Activated CD8-positive, alpha-beta T cell treated with anti-CD3 and anti-CD28 coated beads, Interleukin-2, amount 10 ng/mL, durations not matched to agents 7 days and 5 days (primary cell): ENCODE measurements at regions of chr1 and their contacts with region 1.

Region 1: DNA sequence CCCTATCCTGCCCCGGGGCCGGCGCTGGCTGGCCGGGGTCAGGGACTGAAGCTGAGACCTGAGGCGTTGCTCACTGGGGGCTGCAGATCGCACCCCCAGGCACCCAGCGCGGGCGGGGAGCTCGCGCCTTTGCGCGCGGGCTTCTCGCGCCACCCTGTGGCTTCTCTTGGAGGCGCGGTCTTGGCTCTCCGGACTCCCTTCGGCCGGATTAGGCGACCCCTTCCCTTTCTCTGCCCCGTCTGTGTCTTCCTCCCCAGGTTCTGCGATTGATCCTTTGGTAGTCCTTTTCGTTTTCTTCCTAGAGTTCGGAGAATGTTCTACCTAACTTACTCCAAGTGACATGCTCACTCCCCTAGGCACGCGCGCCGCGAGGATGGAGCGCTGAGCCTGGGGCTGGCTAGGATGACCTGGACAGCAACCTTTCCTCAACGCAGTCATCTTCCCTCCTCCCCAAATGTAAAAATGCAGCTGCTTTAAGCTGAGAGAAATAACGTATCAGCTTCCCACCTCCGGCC is 495 bp upstream of the NTRK1 start:
- DNase-seq: peak; percentile 68
- ATAC-seq: peak; percentile 62
- H3K4me3 Mint-ChIP-seq: peak overlapping the region; percentile 72
- H3K27ac Mint-ChIP-seq: peak overlapping the region; percentile 54
- H3K4me1 Mint-ChIP-seq: peaks cover 56% of the 10 kb centered on the region
- H3K27me3 Mint-ChIP-seq: peaks cover 39% of the 10 kb centered on the region

Region 2: GRCh38 chr1:156638189-156638985 is 221.8 kb before region 1 on chr1:
- CTCF ChIA-PET with region 1: no interaction called
- POLR2A ChIA-PET with region 1: no interaction called
- DNase-seq: no peak
- ATAC-seq: no peak
- H3K4me3 Mint-ChIP-seq: no peak overlapping the region
- H3K27ac Mint-ChIP-seq: no peak overlapping the region
- H3K4me1 Mint-ChIP-seq: peaks cover 19% of the 10 kb centered on the region
- H3K27me3 Mint-ChIP-seq: peaks cover 76% of the 10 kb centered on the region

Region 3: GRCh38 chr1:156689035-156689952 is 170.9 kb before region 1 on chr1:
- CTCF ChIA-PET with region 1: interaction called, 67 read pairs
- POLR2A ChIA-PET with region 1: interaction called, 3 read pairs
- DNase-seq: peak; percentile 83
- ATAC-seq: peak; percentile 97
- H3K4me3 Mint-ChIP-seq: no peak overlapping the region
- H3K27ac Mint-ChIP-seq: no peak overlapping the region
- H3K4me1 Mint-ChIP-seq: peaks cover 36% of the 10 kb centered on the region
- H3K27me3 Mint-ChIP-seq: peaks cover 55% of the 10 kb centered on the region

Region 4: DNA sequence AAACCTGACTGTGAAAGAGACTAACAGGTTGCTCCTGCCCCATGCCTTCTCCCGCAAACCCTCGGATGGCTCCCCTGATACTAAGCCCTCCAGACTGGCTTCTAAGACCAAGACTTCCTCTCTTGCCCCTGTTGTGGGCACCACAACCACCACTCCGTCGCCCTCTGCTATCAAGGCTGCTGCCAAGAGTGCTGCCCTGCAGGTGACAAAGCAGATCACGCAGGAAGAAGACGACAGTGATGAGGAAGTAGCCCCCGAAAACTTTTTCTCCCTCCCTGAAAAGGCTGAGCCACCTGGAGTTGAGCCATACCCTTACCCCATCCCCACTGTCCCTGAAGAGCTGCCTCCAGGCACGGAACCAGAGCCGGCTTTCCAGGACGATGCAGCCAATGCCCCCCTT is 73.5 kb before region 1 on chr1:
- CTCF ChIA-PET with region 1: interaction called, 13 read pairs
- POLR2A ChIA-PET with region 1: no interaction called
- DNase-seq: no peak
- ATAC-seq: no peak
- H3K4me3 Mint-ChIP-seq: no peak overlapping the region
- H3K27ac Mint-ChIP-seq: peak overlapping the region; percentile 56
- H3K4me1 Mint-ChIP-seq: peaks cover 18% of the 10 kb centered on the region
- H3K27me3 Mint-ChIP-seq: no peaks in the 10 kb centered on the region

Region 5: GRCh38 chr1:156813750-156814570 is 46.2 kb before region 1 on chr1:
- CTCF ChIA-PET with region 1: interaction called, 164 read pairs
- POLR2A ChIA-PET with region 1: interaction called, 20 read pairs
- DNase-seq: peak; percentile 83
- ATAC-seq: peak; percentile 55
- H3K4me3 Mint-ChIP-seq: peak overlapping the region; percentile 92
- H3K27ac Mint-ChIP-seq: peak overlapping the region; percentile 100
- H3K4me1 Mint-ChIP-seq: peaks cover 70% of the 10 kb centered on the region
- H3K27me3 Mint-ChIP-seq: no peaks in the 10 kb centered on the region

Region 6: DNA sequence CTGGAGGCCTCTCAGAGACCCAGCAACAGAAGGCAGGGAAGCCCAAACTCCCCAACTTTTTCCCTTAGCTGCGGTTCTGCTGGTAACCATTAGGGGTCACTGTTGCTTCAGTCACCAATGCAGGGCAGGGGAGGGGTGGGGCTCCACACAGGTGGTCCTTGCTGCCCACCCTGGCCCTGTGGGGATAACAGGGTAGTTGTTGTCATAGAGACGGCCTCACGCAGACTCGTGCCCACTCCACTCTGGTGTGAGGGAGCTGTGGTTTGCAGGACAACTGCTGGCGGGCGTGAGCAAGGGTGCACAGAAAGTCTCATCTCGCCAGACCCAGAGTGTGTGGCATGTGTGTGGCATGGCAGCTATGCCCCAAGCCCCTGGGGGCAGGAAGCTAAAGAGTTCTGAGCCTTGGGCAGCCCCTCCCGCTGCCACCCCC is 21.2 kb before region 1 on chr1:
- CTCF ChIA-PET with region 1: interaction called, 313 read pairs
- POLR2A ChIA-PET with region 1: interaction called, 14 read pairs
- DNase-seq: peak; percentile 67
- ATAC-seq: peak; percentile 66
- H3K4me3 Mint-ChIP-seq: no peak overlapping the region
- H3K27ac Mint-ChIP-seq: no peak overlapping the region
- H3K4me1 Mint-ChIP-seq: peaks cover 48% of the 10 kb centered on the region
- H3K27me3 Mint-ChIP-seq: peaks cover 17% of the 10 kb centered on the region

Region 7: GRCh38 chr1:156884560-156885184 is 24.5 kb after region 1 on chr1:
- CTCF ChIA-PET with region 1: interaction called, 138 read pairs
- POLR2A ChIA-PET with region 1: no interaction called
- DNase-seq: no peak
- ATAC-seq: no peak
- H3K4me3 Mint-ChIP-seq: no peak overlapping the region
- H3K27ac Mint-ChIP-seq: no peak overlapping the region
- H3K4me1 Mint-ChIP-seq: no peaks in the 10 kb centered on the region
- H3K27me3 Mint-ChIP-seq: peaks cover 28% of the 10 kb centered on the region

Region 8: DNA sequence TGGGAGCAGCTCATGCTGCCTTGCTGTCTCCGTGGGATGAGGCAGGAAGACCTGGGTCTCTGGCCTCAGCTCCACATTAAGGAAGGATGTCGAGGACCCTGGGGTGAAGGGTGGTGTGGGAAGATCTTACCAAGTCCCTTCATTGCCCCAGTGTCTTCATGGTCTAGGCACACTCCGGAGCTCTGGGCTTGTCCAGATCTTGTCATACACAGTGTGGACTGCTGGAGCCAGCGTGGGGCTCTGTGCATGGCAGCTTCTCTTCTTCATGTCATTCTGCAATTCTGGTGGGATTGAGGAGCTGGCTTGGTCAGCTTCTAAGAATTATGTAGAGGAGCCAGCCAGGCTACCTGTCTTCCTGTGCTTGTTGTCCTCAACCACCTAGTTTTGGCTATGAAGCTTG is 357.3 kb after region 1 on chr1:
- CTCF ChIA-PET with region 1: no interaction called
- POLR2A ChIA-PET with region 1: no interaction called
- DNase-seq: peak; percentile 5
- ATAC-seq: no peak
- H3K4me3 Mint-ChIP-seq: no peak overlapping the region
- H3K27ac Mint-ChIP-seq: no peak overlapping the region
- H3K4me1 Mint-ChIP-seq: no peaks in the 10 kb centered on the region
- H3K27me3 Mint-ChIP-seq: peaks cover 30% of the 10 kb centered on the region